Activated CD8-positive, alpha-beta T cell treated with anti-CD3 and anti-CD28 coated beads for 36 hours (primary cell): ENCODE measurements at regions of chr7 and their contacts with region 1.

Region 1: DNA sequence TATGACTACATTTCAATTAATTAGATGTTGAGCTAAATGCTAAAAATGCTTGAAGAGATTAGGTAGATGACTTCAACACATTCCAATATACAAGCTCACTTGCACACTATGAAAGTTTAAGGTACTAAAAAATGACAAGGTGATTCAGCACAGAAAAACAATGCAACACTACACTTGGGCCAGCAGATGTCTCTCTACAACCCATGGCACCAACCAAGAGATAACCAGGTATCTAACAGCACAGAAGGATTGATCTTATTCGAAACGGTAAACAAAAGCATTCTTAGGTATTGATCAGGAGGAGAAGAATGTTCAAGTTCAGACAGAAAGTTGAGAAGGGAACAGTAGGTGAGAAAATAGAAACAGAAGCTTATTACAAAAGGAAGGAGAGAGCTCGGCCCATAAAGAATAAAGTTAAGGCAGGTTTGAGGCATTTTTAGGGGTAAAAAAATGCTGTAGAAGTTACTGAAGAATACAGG is 248.2 kb upstream of the KLF14 start:
- DNase-seq: no peak
- ATAC-seq: peak; percentile 84
- H3K4me3 Mint-ChIP-seq: no peak overlapping the region
- H3K27ac Mint-ChIP-seq: no peak overlapping the region
- H3K4me1 Mint-ChIP-seq: peaks cover 53% of the 10 kb centered on the region
- H3K27me3 Mint-ChIP-seq: no peaks in the 10 kb centered on the region
- CTCF ChIP-seq: peak; percentile 71

Region 2: GRCh38 chr7:130896898-130897514 is 85.2 kb before region 1 on chr7:
- CTCF ChIA-PET with region 1: interaction called, 18 read pairs
- POLR2A ChIA-PET with region 1: no interaction called
- intact Hi-C with region 1: no loop called
- DNase-seq: peak; percentile 81
- ATAC-seq: peak; percentile 64
- H3K4me3 Mint-ChIP-seq: peak overlapping the region; percentile 40
- H3K27ac Mint-ChIP-seq: peak overlapping the region; percentile 87
- H3K4me1 Mint-ChIP-seq: peaks cover 91% of the 10 kb centered on the region
- H3K27me3 Mint-ChIP-seq: no peaks in the 10 kb centered on the region
- CTCF ChIP-seq: peak; percentile 73

Region 3: DNA sequence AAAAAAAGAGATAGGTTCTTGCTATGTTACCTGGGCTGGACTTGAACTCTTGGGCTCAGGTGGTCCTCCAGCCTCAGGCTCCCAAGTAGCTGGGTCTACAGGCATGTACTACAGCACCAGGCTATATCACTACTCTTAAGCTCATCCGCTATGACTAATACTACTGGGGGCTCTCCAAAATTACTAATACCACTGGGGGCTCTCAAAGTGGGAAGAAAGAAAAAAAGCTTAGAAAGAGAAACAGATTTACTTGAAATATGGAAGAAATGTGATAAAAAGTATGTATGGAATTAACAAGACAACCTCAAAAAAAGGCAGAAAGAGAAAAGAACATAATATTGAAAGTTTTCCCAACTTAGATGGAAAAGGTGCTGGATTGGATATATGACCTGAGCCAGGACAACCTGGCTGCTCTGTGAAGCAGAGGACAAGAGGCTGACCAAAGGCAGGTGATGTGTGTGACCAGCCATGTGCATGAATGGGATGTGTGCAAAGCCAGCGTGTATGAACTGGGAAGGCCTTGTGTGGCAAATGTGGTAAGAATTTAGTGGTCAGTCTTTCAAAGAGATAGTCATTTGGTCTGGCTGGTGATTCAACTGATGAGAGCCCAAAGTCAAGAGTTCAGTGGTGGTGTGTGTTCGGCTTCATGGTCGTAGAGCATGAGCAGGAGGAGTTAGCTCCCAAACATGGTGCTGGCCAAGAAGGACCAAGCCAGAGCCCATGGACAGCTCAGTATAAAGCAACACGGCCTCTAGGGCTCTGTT is 15.8 kb before region 1 on chr7:
- CTCF ChIA-PET with region 1: interaction called, 36 read pairs
- POLR2A ChIA-PET with region 1: interaction called, 166 read pairs
- intact Hi-C with region 1: no loop called
- DNase-seq: peak; percentile 53
- ATAC-seq: peak; percentile 18
- H3K4me3 Mint-ChIP-seq: peak overlapping the region; percentile 26
- H3K27ac Mint-ChIP-seq: peak overlapping the region; percentile 83
- H3K4me1 Mint-ChIP-seq: peaks cover 69% of the 10 kb centered on the region
- H3K27me3 Mint-ChIP-seq: no peaks in the 10 kb centered on the region
- CTCF ChIP-seq: no peak

Region 4: DNA sequence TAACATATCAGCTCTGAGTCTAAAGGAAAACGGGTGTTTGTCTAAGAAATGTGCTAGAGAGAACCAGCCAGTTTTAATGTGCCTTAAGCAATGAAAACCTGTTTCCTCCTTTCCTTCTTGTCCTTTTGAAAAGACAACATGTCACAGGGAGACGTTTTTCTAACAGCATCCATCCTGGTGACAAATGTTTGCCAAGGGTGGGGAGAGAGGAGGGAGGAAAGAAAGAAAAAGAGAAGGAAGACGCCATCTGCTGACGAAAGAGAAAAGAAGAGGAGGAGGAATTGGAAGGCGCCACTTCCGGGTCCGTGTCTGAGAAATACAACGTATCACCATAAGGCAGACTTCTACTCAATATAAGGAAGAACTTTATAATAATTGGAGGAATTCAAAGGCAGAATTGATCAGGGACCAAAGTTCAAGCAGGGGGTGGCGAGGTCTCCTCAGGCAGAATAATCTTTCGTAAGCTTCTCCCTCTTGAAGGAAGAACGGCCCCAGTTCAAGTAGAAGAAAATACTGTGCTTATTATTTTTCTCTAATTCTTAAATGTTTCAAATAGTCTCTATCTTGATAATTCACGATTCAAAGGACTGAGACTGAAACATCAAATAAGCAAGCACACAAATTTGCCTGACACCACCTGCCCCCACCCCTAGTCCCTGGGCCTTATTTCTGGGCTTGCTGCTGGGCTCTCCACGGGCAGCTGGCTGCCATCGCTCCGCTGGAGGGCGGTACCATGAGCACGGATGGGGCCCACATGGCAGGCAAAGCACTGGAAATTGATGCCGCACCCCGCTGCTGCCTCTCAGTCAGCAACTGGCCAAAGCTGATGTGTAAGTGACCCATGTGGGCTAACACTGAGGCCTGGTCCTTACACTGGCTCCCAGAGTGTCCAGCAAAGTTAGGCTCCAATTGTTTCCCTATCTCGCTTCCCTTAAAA is 25.5 kb after region 1 on chr7:
- CTCF ChIA-PET with region 1: interaction called, 69 read pairs
- POLR2A ChIA-PET with region 1: interaction called, 4 read pairs
- intact Hi-C with region 1: no loop called
- DNase-seq: peak; percentile 79
- ATAC-seq: peak; percentile 24
- H3K4me3 Mint-ChIP-seq: peak overlapping the region; percentile 59
- H3K27ac Mint-ChIP-seq: peak overlapping the region; percentile 99
- H3K4me1 Mint-ChIP-seq: peaks cover 82% of the 10 kb centered on the region
- H3K27me3 Mint-ChIP-seq: no peaks in the 10 kb centered on the region
- CTCF ChIP-seq: peak; percentile 59

Region 5: GRCh38 chr7:131021460-131021859 is 39.3 kb after region 1 on chr7:
- CTCF ChIA-PET with region 1: interaction called, 15 read pairs
- POLR2A ChIA-PET with region 1: interaction called, 3 read pairs
- intact Hi-C with region 1: no loop called
- DNase-seq: no peak
- ATAC-seq: peak; percentile 54
- H3K4me3 Mint-ChIP-seq: peak overlapping the region; percentile 22
- H3K27ac Mint-ChIP-seq: peak overlapping the region; percentile 88
- H3K4me1 Mint-ChIP-seq: peaks cover 77% of the 10 kb centered on the region
- H3K27me3 Mint-ChIP-seq: no peaks in the 10 kb centered on the region
- CTCF ChIP-seq: no peak

Region 6: DNA sequence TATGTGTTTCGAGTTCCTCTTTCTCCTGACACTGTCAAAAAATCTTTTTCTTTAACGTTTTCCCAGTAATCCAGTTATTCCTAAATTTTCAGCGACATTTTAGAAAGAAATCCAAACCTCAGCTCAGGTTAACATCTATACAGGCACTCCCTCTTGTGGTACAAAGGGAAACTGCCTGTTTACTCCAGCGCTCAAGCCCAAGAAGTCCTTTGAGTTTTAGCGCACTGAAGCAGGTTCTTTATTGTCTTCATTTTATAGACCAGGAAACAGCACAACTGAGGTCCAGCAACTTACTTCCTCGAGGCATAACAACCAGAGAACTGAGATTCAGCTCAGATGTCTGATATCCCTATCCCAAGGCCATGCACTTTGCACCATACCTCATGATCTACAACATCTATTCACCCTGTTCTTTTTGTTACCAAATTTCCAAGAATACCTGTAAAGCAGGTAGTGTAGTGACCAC is 58.3 kb after region 1 on chr7:
- CTCF ChIA-PET with region 1: interaction called, 208 read pairs
- POLR2A ChIA-PET with region 1: interaction called, 3 read pairs
- intact Hi-C with region 1: loop called (anchors 2 kb)
- DNase-seq: peak; percentile 75
- ATAC-seq: peak; percentile 84
- H3K4me3 Mint-ChIP-seq: peak overlapping the region; percentile 30
- H3K27ac Mint-ChIP-seq: peak overlapping the region; percentile 70
- H3K4me1 Mint-ChIP-seq: peaks cover 62% of the 10 kb centered on the region
- H3K27me3 Mint-ChIP-seq: no peaks in the 10 kb centered on the region
- CTCF ChIP-seq: peak; percentile 97

Region 7: GRCh38 chr7:131057015-131057793 is 75.0 kb after region 1 on chr7:
- CTCF ChIA-PET with region 1: interaction called, 28 read pairs
- POLR2A ChIA-PET with region 1: interaction called, 3 read pairs
- intact Hi-C with region 1: no loop called
- DNase-seq: no peak
- ATAC-seq: peak; percentile 53
- H3K4me3 Mint-ChIP-seq: peak overlapping the region; percentile 43
- H3K27ac Mint-ChIP-seq: peak overlapping the region; percentile 97
- H3K4me1 Mint-ChIP-seq: peaks cover 65% of the 10 kb centered on the region
- H3K27me3 Mint-ChIP-seq: no peaks in the 10 kb centered on the region
- CTCF ChIP-seq: no peak